ENCODE measurements at regions of chr11 and their contacts with region 1.

Region 1: GRCh38 chr11:109658190-109658589 is 236.2 kb downstream of the C11orf87 start:
- DNase-seq: no peak
- H3K4me3 ChIP-seq: no peak overlapping the region
- H3K27ac ChIP-seq: no peak overlapping the region
- H3K4me1 ChIP-seq: no peaks in the 10 kb centered on the region
- H3K27me3 ChIP-seq: peaks cover 89% of the 10 kb centered on the region
- CTCF ChIP-seq: no peak

Region 2: GRCh38 chr11:109870297-109870696 is 212.1 kb after region 1 on chr11:
- CTCF ChIA-PET with region 1: no interaction called
- POLR2A ChIA-PET with region 1: no interaction called
- intact Hi-C with region 1: no loop called
- DNase-seq: no peak
- H3K4me3 ChIP-seq: no peak overlapping the region
- H3K27ac ChIP-seq: no peak overlapping the region
- H3K4me1 ChIP-seq: peaks cover under 1% of the 10 kb centered on the region
- H3K27me3 ChIP-seq: no peaks in the 10 kb centered on the region
- CTCF ChIP-seq: no peak

Region 3: DNA sequence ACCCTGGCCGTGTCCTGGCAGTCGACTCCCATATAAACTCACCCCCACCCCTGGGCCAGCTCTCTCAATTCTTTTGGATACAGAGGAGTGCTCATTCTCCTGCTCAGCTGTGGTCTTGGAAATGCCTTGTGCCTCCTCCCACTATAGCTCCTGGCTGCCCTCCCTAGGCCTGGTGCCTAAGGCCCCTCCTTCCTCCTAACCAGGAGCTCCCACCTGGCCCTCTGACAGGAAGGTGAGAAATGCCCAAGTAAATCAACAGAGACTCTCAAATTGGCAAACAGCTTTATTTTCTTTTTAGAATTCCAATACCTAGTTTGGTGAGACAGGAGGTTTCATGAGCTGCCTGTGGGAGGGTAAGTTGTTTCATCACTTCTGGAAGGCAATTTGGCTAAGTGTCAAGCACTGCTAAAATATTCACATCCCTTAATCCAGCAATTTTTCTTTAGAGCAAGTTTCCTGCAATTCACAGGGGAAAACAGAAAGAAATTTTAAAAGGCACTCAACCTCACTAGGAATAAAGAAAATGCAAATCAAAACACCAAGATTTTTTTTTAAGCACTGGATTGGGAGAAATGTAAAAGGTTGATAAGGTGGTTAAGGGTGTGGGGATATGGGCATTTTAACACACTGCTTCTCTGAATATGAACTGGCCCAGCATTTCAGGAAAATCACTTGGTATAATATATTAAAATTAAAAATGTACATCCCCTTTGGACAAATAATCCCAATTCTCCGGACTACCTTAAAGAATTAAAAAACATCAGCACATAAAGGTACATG is 1263.7 kb after region 1 on chr11:
- CTCF ChIA-PET with region 1: no interaction called
- POLR2A ChIA-PET with region 1: no interaction called
- intact Hi-C with region 1: loop called (anchors 5 kb)
- DNase-seq: peak; percentile 91
- H3K4me3 ChIP-seq: no peak overlapping the region
- H3K27ac ChIP-seq: peak overlapping the region; percentile 83
- H3K4me1 ChIP-seq: peaks cover 42% of the 10 kb centered on the region
- H3K27me3 ChIP-seq: no peaks in the 10 kb centered on the region
- CTCF ChIP-seq: 0 out of 2 replicates have a peak, but pooled peaks have one; percentile 17

Measured in A673 (cell line).